Activated B cell treated with CpG ODN at 0.5 μM for 24 hours (primary cell): ENCODE measurements at regions of chr12 and their contacts with region 1.

Region 1: DNA sequence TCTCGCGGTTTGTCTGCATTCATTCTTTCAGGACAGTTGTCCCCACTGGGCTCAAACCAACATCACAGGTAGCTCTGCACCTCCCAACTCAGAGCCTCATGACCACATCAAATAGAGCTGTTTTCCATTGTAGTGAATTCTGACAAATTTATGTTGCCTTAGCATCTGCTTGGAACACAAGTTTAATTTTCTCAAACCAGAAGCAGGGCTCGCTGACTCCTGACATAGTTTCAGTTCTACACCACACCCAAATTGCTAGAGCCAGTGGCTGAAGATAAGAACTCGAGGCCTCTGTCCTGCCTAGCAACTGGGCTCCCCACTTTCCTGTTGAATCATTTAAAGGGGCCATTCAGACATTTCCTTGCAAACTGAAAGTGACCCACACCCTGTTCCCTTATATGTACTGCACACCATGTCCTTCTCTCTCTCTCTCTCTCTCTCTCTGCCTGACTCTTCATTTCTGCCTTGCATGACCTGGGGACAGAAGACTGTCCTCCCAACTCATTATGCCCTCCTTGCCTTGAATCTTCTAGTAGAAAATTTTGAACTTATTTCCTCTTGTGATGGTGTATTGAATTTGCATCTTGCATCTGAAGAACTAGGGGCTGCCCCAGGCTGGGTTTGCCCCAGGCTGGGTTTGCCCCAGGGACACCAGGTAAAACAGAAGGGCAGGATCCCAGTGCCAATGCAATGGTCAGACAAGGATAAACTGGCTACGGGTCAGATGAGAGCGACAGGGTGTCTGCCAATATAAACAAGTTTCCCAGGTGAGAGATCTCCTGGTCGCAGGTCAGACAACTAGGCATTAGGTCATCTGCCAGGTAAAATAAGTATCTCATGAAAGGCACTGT is 9.7 kb upstream of the WSCD2 start:
- DNase-seq: no peak
- ATAC-seq: peak; percentile 77
- H3K4me3 Mint-ChIP-seq: peak overlapping the region; percentile 53
- H3K27ac Mint-ChIP-seq: peak overlapping the region; percentile 92
- H3K4me1 Mint-ChIP-seq: peaks cover 57% of the 10 kb centered on the region
- H3K27me3 Mint-ChIP-seq: no peaks in the 10 kb centered on the region
- CTCF ChIP-seq: no peak

Region 2: DNA sequence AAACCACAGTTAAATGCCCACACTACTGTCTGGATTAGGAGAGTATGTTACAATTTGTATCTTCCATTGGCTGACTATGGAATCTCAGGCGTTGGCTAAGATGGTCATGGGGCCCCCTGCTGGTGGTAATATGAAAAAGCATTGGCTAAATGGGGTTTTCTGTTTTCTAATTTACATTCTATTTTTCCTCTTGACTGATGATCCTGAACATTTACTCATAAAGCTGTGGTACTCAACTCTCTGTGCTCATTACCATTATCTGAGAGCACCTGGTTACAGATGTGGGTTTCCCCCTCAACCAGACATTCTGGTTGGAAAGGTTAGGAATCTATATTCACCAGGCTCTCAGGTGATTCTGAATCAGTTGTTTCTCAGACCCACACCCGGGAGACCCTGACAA is 74.6 kb after region 1 on chr12:
- CTCF ChIA-PET with region 1: no interaction called
- POLR2A ChIA-PET with region 1: no interaction called
- intact Hi-C with region 1: loop called (anchors 5 kb)
- DNase-seq: no peak
- ATAC-seq: peak; percentile 66
- H3K4me3 Mint-ChIP-seq: no peak overlapping the region
- H3K27ac Mint-ChIP-seq: no peak overlapping the region
- H3K4me1 Mint-ChIP-seq: peaks cover 13% of the 10 kb centered on the region
- H3K27me3 Mint-ChIP-seq: no peaks in the 10 kb centered on the region
- CTCF ChIP-seq: no peak

Region 3: DNA sequence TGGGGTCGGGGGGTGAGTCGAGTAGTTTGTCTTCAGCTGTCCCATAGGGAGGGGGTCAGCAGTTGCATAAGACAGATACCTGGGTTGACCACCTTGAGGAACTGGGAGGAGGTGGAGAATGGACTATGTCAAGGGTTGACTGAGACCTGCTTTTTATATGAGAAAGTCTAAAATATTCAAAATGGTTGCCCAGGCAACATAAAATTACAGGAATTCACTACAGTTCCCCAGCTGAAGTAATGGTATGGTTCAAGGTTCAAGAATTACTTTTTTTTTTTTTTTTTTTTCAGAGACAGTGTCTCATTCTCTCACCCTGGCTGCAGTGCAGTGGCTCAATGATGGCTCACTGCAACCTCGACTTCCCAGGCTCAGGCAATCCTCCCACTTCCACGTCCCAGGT is 1775.6 kb after region 1 on chr12:
- CTCF ChIA-PET with region 1: no interaction called
- POLR2A ChIA-PET with region 1: interaction called, 10 read pairs
- intact Hi-C with region 1: no loop called
- DNase-seq: no peak
- ATAC-seq: no peak
- H3K4me3 Mint-ChIP-seq: no peak overlapping the region
- H3K27ac Mint-ChIP-seq: no peak overlapping the region
- H3K4me1 Mint-ChIP-seq: peaks cover 40% of the 10 kb centered on the region
- H3K27me3 Mint-ChIP-seq: no peaks in the 10 kb centered on the region
- CTCF ChIP-seq: no peak